Adrenal gland (tissue), 19 donors: ENCODE measurements at regions of chr17 and their contacts with region 1.

Region 1: DNA sequence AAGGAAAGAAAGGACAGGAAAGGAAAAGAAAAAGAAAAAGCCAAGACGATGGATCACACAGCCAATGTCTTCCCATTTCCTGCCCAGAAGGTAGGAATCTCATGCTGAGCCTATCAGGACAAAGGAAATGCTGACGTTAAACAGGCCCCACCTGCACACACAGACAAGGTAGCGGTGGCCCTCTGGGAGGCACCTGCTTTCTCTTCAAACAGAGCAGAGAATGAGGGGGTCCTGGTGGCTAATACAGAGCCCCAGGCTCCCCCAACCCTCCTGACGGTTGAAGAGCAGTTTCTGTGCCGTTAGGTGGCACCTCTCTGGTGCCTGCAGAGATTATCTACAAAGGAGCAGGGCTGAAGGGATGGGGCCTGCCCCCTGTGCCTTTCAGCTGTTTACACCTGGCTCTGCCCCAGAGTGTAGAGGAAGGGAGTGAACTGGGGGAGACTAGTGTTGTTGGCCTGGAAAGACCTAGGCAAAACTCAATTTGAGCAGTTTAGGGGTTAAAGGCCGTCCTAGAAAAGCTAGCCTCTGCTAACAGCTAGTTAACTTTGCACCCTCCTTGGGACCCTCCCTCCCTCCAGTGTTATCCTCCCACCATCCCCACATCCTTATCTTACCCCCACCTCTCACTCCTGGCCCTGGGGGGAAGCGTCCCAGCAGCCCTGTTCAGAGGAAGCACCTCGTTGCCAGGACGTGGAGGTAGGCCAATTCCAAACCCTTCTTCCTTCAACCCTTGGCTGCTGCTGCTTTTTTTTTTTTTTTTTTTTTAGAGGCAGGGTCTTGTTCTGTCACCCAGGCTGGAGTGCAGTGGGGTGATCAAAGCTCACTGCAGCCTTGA is 56.3 kb downstream of the ARHGAP27 start:
- DNase-seq: no peak
- H3K4me3 ChIP-seq: no peak overlapping the region
- H3K27ac ChIP-seq: no peak overlapping the region
- H3K4me1 ChIP-seq: peaks cover 11 to 23% of the 10 kb centered on the region in 2 donors
- H3K27me3 ChIP-seq: no peaks in the 10 kb centered on the region
- CTCF ChIP-seq: no peak
- POLR2A ChIP-seq: no peak

Region 2: DNA sequence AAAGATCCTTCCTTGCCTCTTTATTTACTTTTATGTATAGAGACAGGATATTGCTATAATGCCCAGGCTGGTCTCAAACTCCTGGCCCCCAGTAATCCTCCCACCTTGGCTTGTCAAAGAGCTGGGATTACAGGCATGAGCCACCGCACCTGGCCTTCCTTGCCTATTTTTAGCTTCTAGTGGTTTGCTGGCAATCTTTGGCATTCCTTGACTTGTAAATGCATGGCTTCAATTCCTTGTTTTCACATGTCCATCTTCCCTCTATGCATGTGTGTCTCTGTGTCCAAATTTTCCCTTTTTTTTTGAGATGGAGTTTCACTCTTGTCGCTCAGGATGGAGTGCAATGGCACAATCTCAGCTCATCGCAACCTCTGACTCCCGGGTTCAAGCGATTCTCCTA is 192.2 kb before region 1 on chr17:
- intact Hi-C with region 1: no loop called
- DNase-seq: no peak
- H3K4me3 ChIP-seq: no peak overlapping the region
- H3K27ac ChIP-seq: no peak overlapping the region
- H3K4me1 ChIP-seq: no peaks in the 10 kb centered on the region
- H3K27me3 ChIP-seq: no peaks in the 10 kb centered on the region
- CTCF ChIP-seq: no peak
- POLR2A ChIP-seq: no peak

Region 3: GRCh38 chr17:45320931-45321461 is 55.4 kb before region 1 on chr17:
- intact Hi-C with region 1: loop called in 1 of 2 experiments (anchors 5 kb)
- DNase-seq: peak in 4 of 7 donors; percentile 56 to 71 (median 63)
- H3K4me3 ChIP-seq: no peak overlapping the region
- H3K27ac ChIP-seq: peak overlapping the region; percentile 32 to 73 (median 53)
- H3K4me1 ChIP-seq: peaks cover 18 to 39% of the 10 kb centered on the region in 2 donors
- H3K27me3 ChIP-seq: no peaks in the 10 kb centered on the region
- CTCF ChIP-seq: no peak
- POLR2A ChIP-seq: no peak